ENCODE measurements at regions of chr1 and their contacts with region 1.

Region 1: DNA sequence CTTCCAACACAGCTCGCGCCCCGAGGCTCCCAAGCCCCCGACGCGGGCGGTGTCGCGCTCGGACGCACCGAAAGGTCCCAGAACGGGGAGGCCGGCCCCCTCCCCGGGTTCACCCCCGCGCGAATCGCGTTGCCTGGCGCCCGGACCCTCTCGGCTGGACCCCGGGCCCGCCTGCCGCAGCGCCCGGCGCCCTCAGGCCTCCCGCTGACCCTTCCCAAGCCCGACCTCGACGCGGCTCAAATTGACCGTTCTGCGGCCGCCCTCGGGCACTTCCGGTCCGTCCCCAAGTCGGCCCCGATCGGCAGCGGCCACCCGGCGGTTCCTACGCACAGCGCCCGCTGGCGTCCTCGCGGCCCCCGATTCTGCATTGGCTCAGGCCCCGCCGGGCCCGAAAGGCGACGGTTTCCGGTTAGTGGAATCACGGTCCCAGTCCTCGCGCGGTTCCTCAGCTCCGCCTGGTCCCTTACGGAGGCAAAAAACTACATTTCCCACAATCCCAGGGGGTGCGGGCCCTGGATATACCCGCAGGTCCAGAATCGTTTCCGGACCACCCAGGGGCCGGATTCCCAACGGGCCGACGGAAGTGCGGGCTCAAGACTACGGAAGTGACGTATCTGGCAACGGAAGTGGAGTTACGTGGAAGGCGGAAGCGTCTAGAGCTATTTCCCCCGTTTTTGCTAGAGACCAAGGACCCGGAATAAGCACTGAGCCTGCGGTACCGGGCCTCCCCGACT is at the start of gene AURKAIP1:
- DNase-seq: peak; percentile 98
- ATAC-seq: peak; percentile 94
- H3K4me3 ChIP-seq: peak within 1 kb of the TSS; percentile 94
- H3K27ac ChIP-seq: peak within 1 kb of the TSS; percentile 86
- H3K4me1 ChIP-seq: peaks cover 24% of the 10 kb centered on the region
- H3K27me3 ChIP-seq: no peaks in the 10 kb centered on the region
- CTCF ChIP-seq: peak in 2 of 3 experiments; percentile 33 to 35; a peak in 3 of 6 replicates
- EP300 ChIP-seq: peak in 1 of 2 experiments; percentile 32; a peak in 1 of 4 replicates
- POLR2A ChIP-seq: peak; percentile 86
- RAD21 ChIP-seq: no peak
- polyA plus RNA-seq, gene AURKAIP1: 6.5 to 26.6 TPM

Region 2: GRCh38 chr1:983799-984473 is 391.2 kb before region 1 on chr1:
- CTCF ChIA-PET with region 1: interaction called, 10 read pairs
- POLR2A ChIA-PET with region 1: no interaction called
- RAD21 ChIA-PET with region 1: no interaction called
- SMC1A ChIA-PET with region 1: interaction called, 3 read pairs
- in situ Hi-C with region 1: no loop called
- intact Hi-C with region 1: no loop called
- DNase-seq: no peak
- ATAC-seq: peak; percentile 88
- H3K4me3 ChIP-seq: no peak overlapping the region
- H3K27ac ChIP-seq: no peak overlapping the region
- H3K4me1 ChIP-seq: no peaks in the 10 kb centered on the region
- H3K27me3 ChIP-seq: no peaks in the 10 kb centered on the region
- CTCF ChIP-seq: peak; percentile 56 to 97 (median 78)
- EP300 ChIP-seq: no peak
- POLR2A ChIP-seq: no peak
- RAD21 ChIP-seq: peak; percentile 79

Region 3: DNA sequence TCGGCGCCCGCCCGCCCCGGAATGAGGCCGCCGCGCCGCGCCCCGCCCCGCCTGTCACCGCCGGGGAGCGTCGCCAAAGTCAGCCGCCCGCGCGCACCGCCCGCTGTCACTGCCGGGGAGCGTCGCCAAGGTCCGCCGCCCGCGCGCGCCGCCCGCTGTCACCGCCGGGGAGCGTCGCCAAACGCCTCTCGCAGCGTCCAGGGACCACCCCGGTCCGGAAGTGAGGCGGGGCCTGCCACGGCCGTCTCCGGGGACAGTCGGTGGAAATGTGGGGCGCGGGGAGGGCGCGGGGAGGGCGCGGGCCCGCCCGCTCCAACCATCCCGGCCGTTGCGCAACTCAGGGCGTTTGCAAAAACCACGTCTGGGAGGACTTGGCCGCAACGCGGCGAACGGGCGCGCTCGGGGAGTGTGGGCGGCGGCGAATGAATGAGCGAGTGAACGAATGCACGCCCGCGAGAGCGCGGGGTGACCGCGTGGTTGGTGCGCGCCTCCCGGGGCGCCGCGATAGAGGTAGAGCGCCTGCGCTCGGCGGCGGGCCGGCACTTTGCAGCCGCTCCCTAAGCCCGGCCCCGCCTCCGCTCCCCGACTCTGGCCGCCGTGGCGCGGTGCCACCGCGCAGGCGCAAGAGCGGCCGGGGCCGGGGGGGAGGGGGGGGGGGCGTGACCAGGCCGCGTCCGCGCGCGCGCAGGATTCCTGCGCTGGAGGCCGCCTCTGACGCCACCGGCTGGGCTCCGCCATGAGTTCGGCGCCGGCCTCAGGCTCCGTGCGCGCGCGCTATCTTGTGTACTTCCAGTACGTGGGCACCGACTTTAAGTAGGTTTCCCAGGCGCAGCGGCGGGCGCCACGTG is 67.0 kb before region 1 on chr1 and contains the starts of genes ACAP3 and PUSL1:
- CTCF ChIA-PET with region 1: interaction called, 6 read pairs
- POLR2A ChIA-PET with region 1: no interaction called
- RAD21 ChIA-PET with region 1: interaction called, 5 read pairs
- SMC1A ChIA-PET with region 1: interaction called, 5 read pairs
- in situ Hi-C with region 1: no loop called
- intact Hi-C with region 1: loop called (anchors 2 kb)
- DNase-seq: peak; percentile 40
- ATAC-seq: peak; percentile 68
- H3K4me3 ChIP-seq: peak within 1 kb of the TSS; percentile 84
- H3K27ac ChIP-seq: peak within 1 kb of the TSS; percentile 78
- H3K4me1 ChIP-seq: peaks cover 27% of the 10 kb centered on the region
- H3K27me3 ChIP-seq: no peaks in the 10 kb centered on the region
- CTCF ChIP-seq: no peak
- EP300 ChIP-seq: no peak
- POLR2A ChIP-seq: peak; percentile 76
- RAD21 ChIP-seq: no peak
- polyA plus RNA-seq, gene ACAP3: 0.05 to 0.11 TPM
- polyA plus RNA-seq, gene PUSL1: 0.16 to 1.5 TPM

Region 4: GRCh38 chr1:1349256-1350012 is 25.7 kb before region 1 on chr1 and contains the start of gene DVL1:
- CTCF ChIA-PET with region 1: interaction called, 12 read pairs
- POLR2A ChIA-PET with region 1: interaction called, 5 read pairs
- RAD21 ChIA-PET with region 1: interaction called, 4 read pairs
- SMC1A ChIA-PET with region 1: interaction called, 3 read pairs
- in situ Hi-C with region 1: no loop called
- intact Hi-C with region 1: no loop called
- DNase-seq: no peak
- ATAC-seq: peak; percentile 58
- H3K4me3 ChIP-seq: peak within 1 kb of the TSS; percentile 83
- H3K27ac ChIP-seq: peak within 1 kb of the TSS; percentile 80
- H3K4me1 ChIP-seq: peaks cover 6% of the 10 kb centered on the region; the same call in 1 of the 2 replicates
- H3K27me3 ChIP-seq: peaks cover 0 to 2% of the 10 kb centered on the region in 2 experiments; a peak in 2 of 4 replicates
- CTCF ChIP-seq: peak; percentile 34 to 60 (median 44)
- EP300 ChIP-seq: no peak
- POLR2A ChIP-seq: peak; percentile 68
- RAD21 ChIP-seq: peak; percentile 57
- polyA plus RNA-seq, gene DVL1: 0.10 to 0.53 TPM

Region 5: GRCh38 chr1:1399187-1399871 is 24.2 kb after region 1 on chr1 and contains the start of gene CCNL2:
- CTCF ChIA-PET with region 1: interaction called, 5 read pairs
- POLR2A ChIA-PET with region 1: interaction called, 17 read pairs
- RAD21 ChIA-PET with region 1: interaction called, 4 read pairs
- SMC1A ChIA-PET with region 1: no interaction called
- in situ Hi-C with region 1: no loop called
- intact Hi-C with region 1: no loop called
- DNase-seq: peak; percentile 91
- ATAC-seq: peak; percentile 97
- H3K4me3 ChIP-seq: peak within 1 kb of the TSS; percentile 91
- H3K27ac ChIP-seq: peak within 1 kb of the TSS; percentile 84
- H3K4me1 ChIP-seq: peaks cover 26% of the 10 kb centered on the region
- H3K27me3 ChIP-seq: no peaks in the 10 kb centered on the region
- CTCF ChIP-seq: peak; percentile 38 to 71 (median 55); a peak in 5 of 6 replicates
- EP300 ChIP-seq: no peak
- POLR2A ChIP-seq: peak; percentile 88
- RAD21 ChIP-seq: no peak
- polyA plus RNA-seq, gene CCNL2: 2.1 to 5.5 TPM

Region 6: GRCh38 chr1:1441002-1441888 is 66.1 kb after region 1 on chr1:
- CTCF ChIA-PET with region 1: interaction called, 15 read pairs
- POLR2A ChIA-PET with region 1: interaction called, 3 read pairs
- RAD21 ChIA-PET with region 1: interaction called, 6 read pairs
- SMC1A ChIA-PET with region 1: interaction called, 3 read pairs
- in situ Hi-C with region 1: no loop called
- intact Hi-C with region 1: no loop called
- DNase-seq: no peak
- ATAC-seq: peak; percentile 83
- H3K4me3 ChIP-seq: no peak overlapping the region
- H3K27ac ChIP-seq: no peak overlapping the region
- H3K4me1 ChIP-seq: peaks cover 9% of the 10 kb centered on the region
- H3K27me3 ChIP-seq: no peaks in the 10 kb centered on the region
- CTCF ChIP-seq: peak; percentile 88 to 98 (median 89)
- EP300 ChIP-seq: no peak
- POLR2A ChIP-seq: no peak
- RAD21 ChIP-seq: peak; percentile 56

Region 7: DNA sequence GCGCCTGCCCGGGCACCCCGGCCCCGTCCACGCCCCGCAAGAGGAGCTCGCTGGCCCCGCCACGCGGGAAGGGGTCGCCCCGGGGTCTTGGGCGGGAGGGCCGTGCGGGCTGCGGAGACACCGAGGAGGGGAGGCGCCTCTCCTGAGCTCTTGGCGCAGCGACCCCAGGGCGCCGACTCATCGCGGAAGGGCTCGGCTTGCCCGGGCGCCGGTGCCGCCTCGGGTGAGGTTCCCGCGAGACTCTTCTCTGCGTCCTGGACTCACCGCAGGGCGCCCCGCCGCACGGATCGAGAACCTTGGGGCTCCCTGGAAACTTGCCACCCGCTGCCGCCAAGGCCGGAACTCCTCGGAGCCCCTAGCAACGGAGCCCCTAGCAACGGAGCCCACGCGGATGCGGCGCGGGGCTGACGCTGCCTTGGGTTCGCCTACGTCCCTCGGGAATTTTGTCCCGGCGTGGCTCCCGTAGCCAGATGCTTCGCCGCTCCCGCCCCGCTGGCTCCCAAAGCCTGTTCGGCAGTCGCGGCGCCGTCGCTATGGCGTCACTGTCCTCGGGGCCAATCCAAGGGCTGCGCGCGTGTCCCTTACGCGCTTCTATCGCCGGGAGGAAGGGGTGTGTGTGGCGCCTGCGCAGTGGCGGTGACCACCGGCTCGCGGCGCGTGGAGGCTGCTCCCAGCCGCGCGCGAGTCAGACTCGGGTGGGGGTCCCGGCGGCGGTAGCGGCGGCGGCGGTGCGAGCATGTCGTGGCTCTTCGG is 136.6 kb after region 1 on chr1 and contains the start of gene ATAD3A:
- CTCF ChIA-PET with region 1: no interaction called
- POLR2A ChIA-PET with region 1: no interaction called
- RAD21 ChIA-PET with region 1: no interaction called
- SMC1A ChIA-PET with region 1: no interaction called
- in situ Hi-C with region 1: no loop called
- intact Hi-C with region 1: loop called (anchors 10 kb)
- DNase-seq: peak; percentile 84
- ATAC-seq: peak; percentile 94
- H3K4me3 ChIP-seq: peak within 1 kb of the TSS; percentile 76
- H3K27ac ChIP-seq: peak within 1 kb of the TSS; percentile 95
- H3K4me1 ChIP-seq: no peaks in the 10 kb centered on the region
- H3K27me3 ChIP-seq: no peaks in the 10 kb centered on the region
- CTCF ChIP-seq: no peak
- EP300 ChIP-seq: no peak
- POLR2A ChIP-seq: peak; percentile 74; the same call in 1 of the 2 replicates
- RAD21 ChIP-seq: no peak
- polyA plus RNA-seq, gene ATAD3A: 0.05 to 1.3 TPM